ENCODE measurements at regions of chr16 and their contacts with region 1.

Region 1: DNA sequence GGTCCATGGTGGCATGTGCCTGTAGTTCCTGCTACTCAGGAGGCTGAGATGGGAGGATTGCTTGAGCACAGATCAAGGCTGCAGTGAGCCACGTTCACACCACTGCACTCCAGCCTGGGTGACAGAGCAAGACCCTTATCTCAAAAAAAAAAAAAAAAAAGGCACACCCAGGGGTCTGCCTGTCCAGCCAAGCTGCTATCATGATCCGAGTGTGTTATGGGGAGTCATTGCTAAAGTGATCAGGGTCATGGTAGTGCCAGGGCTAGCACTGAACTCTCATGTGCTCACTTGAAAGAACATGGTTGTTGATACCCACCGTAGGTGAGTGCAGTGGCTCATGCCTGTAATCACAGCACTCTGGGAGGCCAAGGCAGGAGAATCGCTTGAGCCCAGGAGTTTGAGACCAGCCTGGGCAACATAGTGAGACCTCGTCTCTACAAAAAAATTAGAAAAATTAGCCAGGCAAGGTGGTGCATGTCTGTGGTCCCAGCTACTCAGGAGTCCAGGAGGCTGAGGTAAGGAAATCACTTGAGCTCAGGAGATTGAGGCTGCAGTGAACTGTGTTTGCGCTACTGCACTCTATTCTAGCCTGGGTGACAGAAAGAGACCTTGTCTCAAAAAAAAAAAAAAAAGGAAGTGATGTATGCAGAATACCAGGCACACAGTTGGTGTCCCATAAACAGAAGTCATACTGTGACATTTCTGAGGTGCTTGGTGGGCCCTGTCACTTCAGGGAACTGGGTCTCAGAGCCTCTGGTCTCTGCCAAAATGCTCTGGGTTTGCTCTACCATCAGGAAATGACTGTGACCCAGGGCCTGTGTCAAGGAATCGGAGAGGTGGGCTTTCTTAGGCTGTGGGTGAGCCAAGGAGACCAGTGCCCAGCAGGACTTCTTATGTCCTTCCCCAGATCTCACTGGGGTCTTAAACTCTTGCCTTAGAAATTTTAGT is 2.2 kb downstream of the PRM1 start:
- DNase-seq: no peak
- H3K4me3 ChIP-seq: no peak overlapping the region
- H3K27ac ChIP-seq: no peak overlapping the region
- H3K4me1 ChIP-seq: no peaks in the 10 kb centered on the region
- H3K27me3 ChIP-seq: no peaks in the 10 kb centered on the region
- CTCF ChIP-seq: no peak

Region 2: GRCh38 chr16:11016993-11017392 is 262.0 kb before region 1 on chr16:
- CTCF ChIA-PET with region 1: no interaction called
- dilution Hi-C with region 1: no loop called
- in situ Hi-C with region 1: no loop called
- intact Hi-C with region 1: no loop called
- DNase-seq: peak; percentile 93
- H3K4me3 ChIP-seq: no peak overlapping the region
- H3K27ac ChIP-seq: peak overlapping the region; percentile 66
- H3K4me1 ChIP-seq: peaks cover 31% of the 10 kb centered on the region
- H3K27me3 ChIP-seq: no peaks in the 10 kb centered on the region
- CTCF ChIP-seq: no peak

Region 3: DNA sequence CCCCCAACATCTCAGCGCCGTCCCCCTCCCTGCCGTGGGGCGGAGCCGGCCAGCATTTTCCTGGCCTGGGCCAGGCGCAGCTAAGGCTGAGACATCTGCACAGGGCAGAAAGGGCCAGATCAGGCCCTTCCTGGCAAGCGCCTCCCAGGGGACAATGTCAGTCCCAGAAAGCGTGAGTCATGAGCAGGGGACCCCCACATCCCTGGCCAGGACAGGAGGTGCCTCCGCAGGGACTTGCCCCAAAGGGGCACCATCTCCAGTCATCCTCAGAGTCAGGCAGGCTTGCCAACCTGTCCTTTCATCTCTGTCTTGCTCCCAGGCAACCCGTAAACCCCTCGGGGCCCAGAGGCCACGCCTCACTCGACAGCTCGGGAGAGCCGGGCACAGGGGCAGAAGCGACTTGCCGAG is 66.2 kb before region 1 on chr16:
- CTCF ChIA-PET with region 1: no interaction called
- dilution Hi-C with region 1: loop called (anchors 5 kb)
- in situ Hi-C with region 1: no loop called
- intact Hi-C with region 1: no loop called
- DNase-seq: no peak
- H3K4me3 ChIP-seq: no peak overlapping the region
- H3K27ac ChIP-seq: no peak overlapping the region
- H3K4me1 ChIP-seq: peaks cover 17% of the 10 kb centered on the region
- H3K27me3 ChIP-seq: no peaks in the 10 kb centered on the region
- CTCF ChIP-seq: no peak

Region 4: GRCh38 chr16:11232852-11233726 is 45.9 kb before region 1 on chr16:
- CTCF ChIA-PET with region 1: no interaction called
- dilution Hi-C with region 1: no loop called
- in situ Hi-C with region 1: no loop called
- intact Hi-C with region 1: no loop called
- DNase-seq: no peak
- H3K4me3 ChIP-seq: no peak overlapping the region
- H3K27ac ChIP-seq: no peak overlapping the region
- H3K4me1 ChIP-seq: no peaks in the 10 kb centered on the region
- H3K27me3 ChIP-seq: no peaks in the 10 kb centered on the region
- CTCF ChIP-seq: no peak

Measured in mammary epithelial cell (primary cell).